ENCODE measurements at regions of chr1 and their contacts with region 1.

Region 1: DNA sequence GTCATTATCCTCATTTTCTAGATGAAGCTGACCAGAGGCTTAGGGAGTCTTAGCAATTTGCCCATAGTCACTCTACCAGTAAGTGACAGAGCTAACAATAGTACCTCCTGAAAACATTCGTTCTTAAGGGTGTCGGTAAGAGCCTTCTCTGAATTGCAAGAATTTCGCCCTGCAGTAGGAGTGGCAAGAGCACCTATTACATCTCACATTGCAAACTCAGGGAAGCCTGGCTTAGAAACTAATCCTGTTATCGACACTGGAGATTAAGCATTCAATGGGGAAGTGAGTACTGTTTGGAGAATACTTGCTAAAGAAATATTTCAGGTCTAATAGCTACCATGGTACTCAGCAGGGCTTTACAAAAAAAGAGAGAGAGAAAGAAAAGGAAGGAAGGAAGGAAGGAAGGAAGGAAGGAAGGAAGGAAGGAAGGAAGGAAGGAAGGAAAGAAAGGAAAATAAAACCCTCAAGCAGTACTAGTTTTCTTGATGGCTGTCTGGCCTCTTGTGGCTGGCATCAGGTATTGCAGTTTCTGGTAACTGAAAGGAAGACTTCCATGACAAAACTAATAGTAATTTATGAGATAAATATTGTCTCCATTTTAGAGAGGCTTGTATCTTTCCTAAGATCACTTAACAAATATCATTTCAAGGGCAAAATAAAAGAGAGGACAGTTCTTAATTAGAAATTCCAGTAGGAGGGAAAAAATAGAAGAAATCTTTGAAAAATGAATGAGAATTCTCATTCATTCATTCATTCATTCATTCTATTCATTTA is 10.4 kb downstream of the C1orf226 start:
- DNase-seq: no peak
- ATAC-seq: peak; percentile 54
- H3K4me3 ChIP-seq: no peak overlapping the region
- H3K4me1 ChIP-seq: peaks cover 8% of the 10 kb centered on the region
- CTCF ChIP-seq: peak; percentile 51

Region 2: GRCh38 chr1:161933592-161934588 is 458.1 kb before region 1 on chr1:
- intact Hi-C with region 1: no loop called
- DNase-seq: no peak
- ATAC-seq: peak; percentile 31
- H3K4me3 ChIP-seq: no peak overlapping the region
- H3K4me1 ChIP-seq: no peaks in the 10 kb centered on the region
- CTCF ChIP-seq: no peak

Region 3: GRCh38 chr1:162056043-162056442 is 335.9 kb before region 1 on chr1:
- intact Hi-C with region 1: loop called in 1 of 2 experiments (anchors 5 kb)
- DNase-seq: peak in 2 of 3 donors; percentile 58 to 82
- ATAC-seq: peak; percentile 94
- H3K4me3 ChIP-seq: no peak overlapping the region
- H3K4me1 ChIP-seq: no peaks in the 10 kb centered on the region
- CTCF ChIP-seq: peak; percentile 62

Region 4: DNA sequence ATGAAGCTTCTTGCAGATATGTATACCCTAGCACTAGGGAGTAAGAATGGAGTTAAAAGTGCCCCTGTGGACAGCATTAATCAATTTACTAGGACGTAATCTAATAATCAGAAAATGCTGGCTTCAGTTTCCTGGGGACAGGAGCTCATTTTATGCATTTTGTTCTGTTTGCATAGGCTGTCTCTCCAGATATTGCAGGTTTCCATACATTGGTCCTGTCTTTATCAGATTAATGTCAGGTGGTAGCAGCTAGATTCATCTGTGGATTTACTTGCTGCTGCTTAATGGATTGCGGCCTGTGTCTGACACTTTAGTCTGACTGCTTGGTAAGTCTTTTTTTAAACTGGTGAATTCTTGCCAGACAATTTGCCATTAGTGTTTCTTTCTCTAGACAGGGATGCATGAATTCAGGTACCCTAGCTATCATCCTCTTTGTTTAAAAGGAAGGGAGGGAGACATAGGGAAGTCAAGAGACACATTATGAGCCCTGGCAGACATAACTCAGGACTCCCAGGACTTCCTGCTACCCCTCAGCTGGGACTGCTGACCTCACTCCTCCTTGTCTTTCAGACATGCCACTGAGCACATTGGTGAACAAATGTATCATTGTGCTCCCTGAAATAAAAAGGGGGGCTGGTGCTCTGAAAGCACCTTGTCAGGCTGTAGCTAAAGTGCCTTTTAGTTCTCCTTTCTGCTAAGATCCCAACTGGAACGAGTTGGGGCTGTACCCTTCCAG is 274.8 kb before region 1 on chr1:
- intact Hi-C with region 1: no loop called
- DNase-seq: no peak
- ATAC-seq: no peak
- H3K4me3 ChIP-seq: no peak overlapping the region
- H3K4me1 ChIP-seq: no peaks in the 10 kb centered on the region
- CTCF ChIP-seq: no peak

Region 5: DNA sequence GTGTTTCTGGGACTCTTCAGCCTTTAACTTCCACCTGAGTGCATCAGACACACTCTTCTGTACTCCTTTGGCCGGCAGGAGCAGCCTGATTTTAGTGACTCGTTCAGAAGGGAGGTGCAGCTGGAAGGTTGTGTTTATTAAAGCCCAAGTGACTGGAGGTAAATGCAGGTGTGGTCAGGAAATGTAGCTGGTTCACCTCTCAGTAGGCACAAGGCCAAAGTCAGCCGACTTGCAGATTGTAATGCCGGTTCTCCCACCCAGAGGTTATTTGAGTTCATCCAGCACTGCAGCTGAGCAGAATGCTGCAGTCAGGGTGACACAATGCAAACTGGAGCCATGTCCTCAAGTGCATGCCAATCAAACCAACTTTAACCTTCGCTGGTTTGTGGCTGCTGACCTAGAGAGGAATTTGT is 106.8 kb before region 1 on chr1:
- intact Hi-C with region 1: loop called in 1 of 2 experiments (anchors 10 kb)
- DNase-seq: peak; percentile 67 to 94 (median 75)
- ATAC-seq: peak; percentile 98
- H3K4me3 ChIP-seq: no peak overlapping the region
- H3K4me1 ChIP-seq: peaks cover 28% of the 10 kb centered on the region
- CTCF ChIP-seq: no peak

Region 6: DNA sequence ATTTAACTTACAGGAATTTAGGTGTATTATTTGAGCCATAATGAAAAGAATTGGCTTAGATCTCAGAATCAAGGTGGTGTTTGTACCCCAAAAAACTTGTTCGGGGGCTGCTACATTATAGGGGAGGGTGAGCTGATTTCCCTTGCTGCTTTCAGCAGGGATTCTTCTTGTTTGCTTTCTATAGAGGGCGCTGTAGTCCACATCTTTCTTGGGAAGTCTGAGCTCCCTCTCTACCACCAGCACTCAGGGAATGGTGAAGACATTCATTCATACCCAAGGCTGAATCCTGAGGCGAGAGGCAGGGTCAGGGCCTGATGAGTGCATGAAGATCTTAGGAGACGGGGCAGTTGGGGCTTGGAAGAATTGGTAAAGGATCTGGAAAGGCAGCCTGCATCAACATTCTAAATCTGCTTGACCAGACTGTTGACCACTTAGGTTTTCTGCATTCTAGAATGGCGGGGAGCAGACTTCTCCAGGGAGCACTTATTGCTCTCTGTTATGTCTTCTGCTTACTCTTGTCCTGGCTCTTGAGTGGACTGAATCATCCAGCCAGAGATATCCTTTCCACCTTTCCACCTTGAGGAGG is 34.2 kb before region 1 on chr1:
- intact Hi-C with region 1: loop called in 1 of 2 experiments (anchors 5 kb)
- DNase-seq: peak in 1 of 3 donors; percentile 63
- ATAC-seq: peak; percentile 66
- H3K4me3 ChIP-seq: no peak overlapping the region
- H3K4me1 ChIP-seq: peaks cover 6% of the 10 kb centered on the region
- CTCF ChIP-seq: peak; percentile 14

Region 7: DNA sequence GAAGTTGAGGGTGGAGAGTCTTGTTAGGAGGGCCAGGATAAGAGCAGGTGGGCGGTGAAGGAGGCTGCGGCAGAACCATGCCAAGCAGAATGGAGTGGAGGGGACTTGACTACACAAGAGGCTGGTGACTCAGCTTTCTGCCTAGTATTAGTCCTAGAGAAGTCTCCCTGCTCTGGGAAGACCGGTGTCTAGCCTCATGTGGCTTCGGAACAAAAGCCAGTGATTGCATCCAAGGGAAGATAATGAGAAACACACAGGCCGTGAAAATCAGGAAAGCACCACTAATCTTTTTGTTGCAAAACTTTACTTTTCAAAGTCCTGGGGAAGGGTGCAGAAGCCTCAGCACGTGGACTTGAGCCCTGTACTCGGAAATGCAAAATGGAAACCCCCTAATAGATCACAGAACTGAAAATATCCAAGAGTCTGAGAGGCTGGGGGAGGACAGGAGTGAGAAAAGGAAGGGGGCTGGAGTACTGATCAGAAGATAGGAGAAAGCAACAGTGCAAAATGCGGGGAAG is 271.7 kb after region 1 on chr1:
- intact Hi-C with region 1: no loop called
- DNase-seq: no peak
- ATAC-seq: peak; percentile 32
- H3K4me3 ChIP-seq: no peak overlapping the region
- H3K4me1 ChIP-seq: no peaks in the 10 kb centered on the region
- CTCF ChIP-seq: no peak

Measured in mucosa of descending colon (tissue), 3 donors.